PC-3 (cell line): ENCODE measurements at regions of chr10 and their contacts with region 1.

Region 1: GRCh38 chr10:48363617-48364355 is 57.3 kb downstream of the MAPK8 start:
- DNase-seq: peak; percentile 86
- ATAC-seq: peak; percentile 71
- H3K4me3 ChIP-seq: no peak overlapping the region
- H3K27ac ChIP-seq: 0 out of 2 replicates have a peak overlapping the region, but pooled peaks have one; percentile 9
- H3K4me1 ChIP-seq: peaks cover 27% of the 10 kb centered on the region
- H3K27me3 ChIP-seq: peaks cover 28% of the 10 kb centered on the region
- CTCF ChIP-seq: peak; percentile 93

Region 2: GRCh38 chr10:48383388-48383787 is 19.6 kb after region 1 on chr10:
- CTCF ChIA-PET with region 1: no interaction called
- POLR2A ChIA-PET with region 1: no interaction called
- intact Hi-C with region 1: loop called (anchors 2 kb)
- DNase-seq: no peak
- ATAC-seq: no peak
- H3K4me3 ChIP-seq: no peak overlapping the region
- H3K27ac ChIP-seq: no peak overlapping the region
- H3K4me1 ChIP-seq: no peaks in the 10 kb centered on the region
- H3K27me3 ChIP-seq: no peaks in the 10 kb centered on the region
- CTCF ChIP-seq: no peak

Region 3: DNA sequence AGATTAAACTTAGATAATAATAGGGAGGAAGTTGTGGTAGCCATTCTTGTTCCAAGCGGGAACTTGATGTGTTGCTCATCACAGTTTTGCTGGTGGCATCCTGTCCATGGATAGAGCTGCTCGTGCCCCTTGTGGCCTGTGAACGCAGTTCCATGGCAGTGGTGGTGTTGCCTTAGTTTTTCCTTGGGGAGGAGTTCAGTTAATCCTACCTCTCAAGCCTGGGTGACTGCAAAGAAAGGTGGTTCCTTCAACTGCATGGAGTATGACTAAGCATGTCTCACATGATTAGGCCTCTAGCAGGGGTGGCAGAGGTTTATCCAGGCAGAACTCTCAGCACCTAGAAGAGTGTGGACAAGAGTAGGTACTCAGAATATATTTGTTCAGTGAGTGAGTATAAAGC is 42.4 kb after region 1 on chr10:
- CTCF ChIA-PET with region 1: no interaction called
- POLR2A ChIA-PET with region 1: no interaction called
- intact Hi-C with region 1: loop called (anchors 5 kb)
- DNase-seq: peak; percentile 65
- ATAC-seq: peak; percentile 91
- H3K4me3 ChIP-seq: no peak overlapping the region
- H3K27ac ChIP-seq: no peak overlapping the region
- H3K4me1 ChIP-seq: peaks cover 8% of the 10 kb centered on the region
- H3K27me3 ChIP-seq: no peaks in the 10 kb centered on the region
- CTCF ChIP-seq: 0 out of 2 replicates have a peak, but pooled peaks have one; percentile 24

Region 4: DNA sequence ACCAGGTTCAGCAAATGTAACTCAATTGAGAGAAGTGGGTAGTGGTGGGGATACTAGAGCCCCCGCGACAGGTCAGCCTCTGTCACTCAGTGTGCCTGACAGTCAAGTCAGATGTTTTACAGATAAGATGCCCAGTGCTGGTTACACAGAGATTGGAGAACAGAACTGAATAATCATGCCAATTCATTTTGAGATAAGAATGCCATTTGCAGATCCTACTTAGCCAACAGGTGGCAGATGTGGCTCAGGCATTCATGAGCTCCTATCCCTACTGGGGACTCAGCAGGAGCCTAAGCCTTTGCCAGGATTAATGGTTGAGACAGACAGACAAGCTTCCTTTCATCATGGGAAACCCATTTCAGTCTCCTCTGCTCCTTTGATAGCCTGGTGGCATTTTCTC is 80.5 kb after region 1 on chr10:
- CTCF ChIA-PET with region 1: interaction called, 3 read pairs
- POLR2A ChIA-PET with region 1: no interaction called
- intact Hi-C with region 1: loop called (anchors 2 kb)
- DNase-seq: peak; percentile 49
- ATAC-seq: peak; percentile 62
- H3K4me3 ChIP-seq: no peak overlapping the region
- H3K27ac ChIP-seq: no peak overlapping the region
- H3K4me1 ChIP-seq: peaks cover 10% of the 10 kb centered on the region
- H3K27me3 ChIP-seq: no peaks in the 10 kb centered on the region
- CTCF ChIP-seq: peak; percentile 47

Region 5: DNA sequence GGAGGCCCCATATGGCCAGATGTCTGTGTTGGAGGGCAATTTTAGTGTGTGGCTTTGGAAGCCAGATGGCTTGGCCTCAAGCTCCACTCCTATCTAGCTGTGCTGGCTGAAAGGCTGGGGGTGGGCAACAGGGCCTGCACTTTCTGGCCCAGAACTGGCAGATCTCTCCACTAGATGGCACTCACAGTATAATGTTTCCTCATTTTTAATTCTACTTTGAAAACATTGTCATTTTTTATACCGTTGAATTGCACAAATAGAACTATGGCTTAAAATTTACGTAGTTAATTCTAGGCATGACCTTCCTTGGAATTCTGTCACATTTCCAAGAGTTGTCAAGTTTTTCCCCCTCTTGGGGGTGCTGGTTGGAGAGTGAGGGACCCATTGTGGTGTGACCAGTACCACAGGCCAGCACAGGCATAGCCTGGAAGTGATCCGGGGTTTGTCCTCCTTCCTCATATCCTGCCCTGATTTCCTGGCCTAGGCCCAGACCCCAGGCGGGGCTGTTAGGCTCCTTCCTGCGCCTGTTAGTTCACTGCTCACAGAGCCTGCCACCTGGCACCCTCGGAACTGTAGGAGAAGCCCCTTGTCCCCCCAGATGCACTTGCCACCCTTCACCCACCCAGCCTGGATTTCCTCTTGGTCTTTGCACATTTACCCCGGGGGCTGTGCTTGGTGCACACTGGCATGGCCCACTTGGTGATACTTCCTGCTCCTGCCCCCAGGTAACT is 188.2 kb after region 1 on chr10:
- CTCF ChIA-PET with region 1: no interaction called
- POLR2A ChIA-PET with region 1: no interaction called
- intact Hi-C with region 1: loop called (anchors 1 kb)
- DNase-seq: peak; percentile 81
- ATAC-seq: peak; percentile 74
- H3K4me3 ChIP-seq: no peak overlapping the region
- H3K27ac ChIP-seq: no peak overlapping the region
- H3K4me1 ChIP-seq: no peaks in the 10 kb centered on the region
- H3K27me3 ChIP-seq: no peaks in the 10 kb centered on the region
- CTCF ChIP-seq: peak; percentile 98

Region 6: GRCh38 chr10:49324711-49325110 is 960.9 kb after region 1 on chr10:
- CTCF ChIA-PET with region 1: no interaction called
- POLR2A ChIA-PET with region 1: no interaction called
- intact Hi-C with region 1: loop called (anchors 10 kb)
- DNase-seq: peak; percentile 57
- ATAC-seq: peak; percentile 40; the same call in 1 of the 2 replicates
- H3K4me3 ChIP-seq: no peak overlapping the region
- H3K27ac ChIP-seq: no peak overlapping the region
- H3K4me1 ChIP-seq: no peaks in the 10 kb centered on the region
- H3K27me3 ChIP-seq: peaks cover 95% of the 10 kb centered on the region
- CTCF ChIP-seq: peak; percentile 62